ENCODE measurements at regions of chr19 and their contacts with region 1.

Region 1: DNA sequence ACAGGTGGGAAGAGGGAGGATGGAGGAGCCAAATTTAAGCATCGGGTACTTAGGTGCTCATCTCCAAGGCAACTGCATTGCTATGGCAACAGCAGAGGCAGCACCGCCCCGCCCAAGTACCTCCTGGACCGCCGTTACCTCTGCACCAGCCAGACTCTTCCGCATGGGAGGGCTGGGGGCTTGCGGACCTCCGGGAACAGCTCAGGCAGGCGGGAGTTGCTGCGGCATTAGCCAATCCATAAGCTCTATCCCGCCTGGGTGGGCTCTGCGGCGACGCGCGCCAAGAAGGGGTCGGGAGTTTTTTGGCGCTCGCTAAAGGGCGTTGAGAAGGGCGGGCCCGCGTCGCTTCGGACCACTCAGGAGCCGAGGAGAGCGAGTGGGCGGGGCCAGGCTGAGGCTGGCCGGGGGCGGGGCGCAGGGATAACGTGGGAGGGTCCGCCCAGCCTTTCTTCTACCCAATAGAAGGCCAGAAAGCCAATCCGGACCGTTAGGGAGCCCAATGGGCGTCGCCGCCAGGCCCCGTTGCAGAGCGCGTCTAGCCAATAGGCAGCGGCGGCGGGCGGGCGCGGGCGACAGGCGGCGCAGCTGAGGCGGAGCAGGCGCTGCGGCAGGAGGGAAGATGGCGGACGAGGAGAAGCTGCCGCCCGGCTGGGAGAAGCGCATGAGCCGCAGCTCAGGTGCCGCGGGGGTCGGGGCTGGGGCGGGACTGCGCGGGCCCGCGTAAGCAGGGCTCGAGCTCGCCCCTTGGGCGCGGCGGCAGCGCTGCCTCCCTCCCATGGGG is at the start of gene PIN1:
- DNase-seq: peak; percentile 100
- H3K4me3 Mint-ChIP-seq: peak within 1 kb of the TSS; percentile 91
- H3K27ac Mint-ChIP-seq: peak within 1 kb of the TSS; percentile 78
- H3K4me1 Mint-ChIP-seq: peaks cover 23% of the 10 kb centered on the region
- H3K27me3 Mint-ChIP-seq: no peaks in the 10 kb centered on the region
- total RNA-seq, gene PIN1: 85.4 to 86.1 TPM

Region 2: DNA sequence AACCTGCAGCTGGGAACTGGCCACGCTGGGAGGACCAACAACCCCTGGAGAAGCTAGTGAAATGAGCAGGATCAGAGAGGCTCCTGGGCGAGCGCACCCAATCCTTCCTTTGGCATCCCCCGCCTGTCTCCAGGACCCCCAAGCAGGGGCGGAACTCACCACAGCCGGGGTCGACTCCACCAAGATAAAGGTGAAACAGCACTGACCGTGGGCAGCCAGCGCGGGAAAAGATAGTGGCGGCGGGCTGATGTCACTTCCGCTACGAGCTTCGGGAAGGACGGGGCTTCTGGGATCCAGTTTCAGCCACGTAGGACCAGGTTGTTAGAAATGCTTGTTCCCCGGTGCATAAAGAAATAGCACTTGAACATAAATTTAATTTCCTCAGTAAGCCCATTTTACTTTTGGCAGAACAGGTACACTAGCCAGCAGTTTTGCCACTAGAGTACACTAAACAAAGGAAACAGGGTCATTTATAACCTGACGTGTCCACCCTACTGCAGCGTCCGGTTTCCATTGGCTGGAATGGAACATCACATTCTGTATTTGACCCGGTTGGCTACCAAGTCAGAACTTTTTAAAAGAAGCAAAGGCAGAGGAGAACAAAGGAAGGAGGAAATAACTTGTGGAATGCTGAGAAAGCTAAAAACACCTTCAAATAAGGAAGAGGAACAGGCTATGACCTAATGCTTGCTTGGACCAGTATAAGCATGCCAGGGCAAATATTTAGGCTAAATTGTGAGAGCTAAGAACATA is 134.5 kb before region 1 on chr19:
- CTCF ChIA-PET with region 1: no interaction called
- POLR2A ChIA-PET with region 1: no interaction called
- intact Hi-C with region 1: no loop called
- DNase-seq: no peak
- H3K4me3 Mint-ChIP-seq: no peak overlapping the region
- H3K27ac Mint-ChIP-seq: no peak overlapping the region
- H3K4me1 Mint-ChIP-seq: peaks cover 4% of the 10 kb centered on the region
- H3K27me3 Mint-ChIP-seq: no peaks in the 10 kb centered on the region

Region 3: DNA sequence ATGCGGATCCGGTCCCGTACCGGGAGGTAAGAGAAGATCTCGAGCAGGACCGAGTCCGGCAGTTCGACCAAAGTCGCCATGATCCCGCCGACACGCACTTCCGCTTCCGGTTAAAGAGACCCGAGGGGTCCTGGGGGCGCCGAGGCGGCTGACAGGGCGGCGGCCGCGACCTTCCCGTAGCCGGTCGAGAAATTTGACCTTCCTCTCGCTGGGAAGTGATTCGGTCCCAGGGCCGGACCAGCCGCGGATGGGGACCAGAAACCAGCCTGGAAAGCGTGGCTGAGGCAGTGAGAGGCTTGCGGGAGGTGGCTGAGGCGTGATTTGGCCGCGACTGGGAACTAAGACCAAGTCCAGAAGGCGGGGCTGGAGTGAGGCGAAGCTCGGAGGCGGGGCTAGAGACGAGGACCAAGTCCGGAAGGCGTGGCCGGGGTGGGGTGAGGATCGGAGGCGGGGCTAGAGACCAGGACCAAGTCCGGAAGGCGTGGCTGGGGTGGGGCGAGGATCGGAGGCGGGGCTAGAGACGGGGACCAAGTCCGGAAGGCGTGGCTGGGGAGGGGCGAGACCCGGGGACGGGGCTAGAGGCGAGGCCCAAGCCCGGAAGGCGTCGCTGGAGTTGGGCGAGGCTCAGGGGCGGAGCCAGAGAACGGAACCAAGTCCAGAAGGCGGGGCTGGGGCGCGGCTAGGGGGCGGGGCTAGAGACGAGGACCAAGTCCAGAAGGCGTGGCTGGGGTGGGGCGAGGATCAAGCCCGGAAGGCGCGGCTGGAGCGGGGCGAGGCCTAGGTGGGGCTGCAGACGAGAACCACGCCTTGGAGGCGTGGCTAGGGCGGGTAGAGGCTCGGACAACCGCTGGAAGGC is 16.0 kb before region 1 on chr19 and contains the start of gene FBXL12:
- CTCF ChIA-PET with region 1: no interaction called
- POLR2A ChIA-PET with region 1: no interaction called
- intact Hi-C with region 1: loop called (anchors 1 kb)
- DNase-seq: peak; percentile 100
- H3K4me3 Mint-ChIP-seq: peak within 1 kb of the TSS; percentile 88
- H3K27ac Mint-ChIP-seq: peak within 1 kb of the TSS; percentile 91
- H3K4me1 Mint-ChIP-seq: peaks cover 28% of the 10 kb centered on the region
- H3K27me3 Mint-ChIP-seq: no peaks in the 10 kb centered on the region
- total RNA-seq, gene FBXL12: 20.7 to 22.0 TPM

Region 4: DNA sequence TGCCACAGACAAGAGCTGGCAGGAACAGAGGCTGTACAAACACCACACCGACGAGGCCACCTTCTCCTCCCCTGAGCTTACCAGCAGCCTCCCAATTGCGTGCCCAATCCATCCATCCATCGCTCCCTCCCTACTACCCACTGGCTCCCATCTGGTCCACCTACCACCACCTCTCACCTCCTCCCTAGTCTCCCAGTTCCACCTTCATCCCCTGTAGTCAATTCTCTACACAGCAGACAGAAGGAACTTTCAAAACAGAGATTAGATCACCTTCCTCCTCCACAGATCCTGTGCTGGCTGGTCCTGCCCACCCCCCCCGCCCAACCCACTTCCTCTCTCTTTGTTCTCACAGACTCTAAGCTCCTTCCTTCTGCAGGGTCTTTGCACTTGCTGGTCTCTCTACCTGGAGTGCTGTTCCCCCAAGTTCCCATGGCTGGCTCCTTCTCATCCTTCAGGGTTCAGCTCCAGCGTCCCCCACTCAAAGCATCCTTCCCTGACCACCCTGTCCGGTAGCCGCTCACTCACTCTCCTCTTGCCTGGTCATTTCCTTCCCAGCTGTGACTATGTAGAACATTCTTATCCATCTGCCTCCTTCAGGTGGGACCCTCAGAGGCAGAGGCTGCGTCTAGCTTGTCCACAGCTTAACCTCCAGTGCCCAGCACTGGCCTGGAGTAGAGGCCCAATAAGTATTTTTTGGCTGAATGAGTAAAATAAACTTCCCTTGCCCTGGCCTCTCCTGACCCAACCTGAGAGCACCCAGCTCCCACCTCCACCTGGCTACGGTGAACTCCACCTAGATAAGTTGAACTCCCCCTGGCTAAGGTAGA is 23.2 kb after region 1 on chr19:
- CTCF ChIA-PET with region 1: interaction called, 4 read pairs
- POLR2A ChIA-PET with region 1: no interaction called
- intact Hi-C with region 1: loop called (anchors 2 kb)
- DNase-seq: peak; percentile 41
- H3K4me3 Mint-ChIP-seq: peak overlapping the region; percentile 56
- H3K27ac Mint-ChIP-seq: peak overlapping the region; percentile 86
- H3K4me1 Mint-ChIP-seq: peaks cover 56% of the 10 kb centered on the region
- H3K27me3 Mint-ChIP-seq: no peaks in the 10 kb centered on the region